Colonic mucosa (tissue), 4 donors: ENCODE measurements at regions of chr7 and their contacts with region 1.

Region 1: DNA sequence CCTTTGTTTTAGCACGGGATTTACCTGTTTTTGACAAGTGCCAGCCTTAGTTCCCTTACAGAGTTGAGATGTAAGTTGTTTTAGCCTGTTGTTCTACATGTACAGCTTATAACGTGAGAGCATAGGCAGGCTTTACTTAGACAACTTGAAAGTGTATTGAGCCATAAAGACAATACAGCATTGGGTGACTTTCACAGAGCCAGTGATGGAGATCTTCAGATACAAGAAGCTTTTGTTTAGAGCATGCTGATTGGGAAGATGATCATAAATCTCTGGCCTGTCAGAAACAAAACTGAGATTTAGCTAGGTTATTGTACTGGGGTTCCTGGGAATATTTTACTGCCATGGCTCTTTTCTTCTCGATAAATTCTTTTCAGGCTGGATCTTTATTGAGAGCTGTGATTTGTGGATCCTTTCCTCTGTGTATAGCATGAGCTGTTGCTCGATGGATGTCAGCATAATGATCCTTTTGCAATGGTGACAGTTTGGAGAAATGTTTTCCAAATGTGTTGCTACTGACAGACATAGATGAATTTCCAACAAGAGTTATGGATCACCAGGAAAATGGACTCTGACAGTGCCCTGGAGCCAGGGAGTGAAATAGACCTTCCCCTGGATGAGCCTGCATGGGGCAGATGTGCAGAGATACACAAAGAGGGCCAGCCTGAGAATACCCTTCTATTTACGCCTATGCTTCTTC is 30.2 kb downstream of the LHFPL3 start:
- DNase-seq: no peak
- H3K4me3 ChIP-seq: no peak overlapping the region
- H3K27ac ChIP-seq: no peak overlapping the region
- H3K4me1 ChIP-seq: no peaks in the 10 kb centered on the region
- H3K27me3 ChIP-seq: no peaks in the 10 kb centered on the region
- CTCF ChIP-seq: no peak

Region 2: DNA sequence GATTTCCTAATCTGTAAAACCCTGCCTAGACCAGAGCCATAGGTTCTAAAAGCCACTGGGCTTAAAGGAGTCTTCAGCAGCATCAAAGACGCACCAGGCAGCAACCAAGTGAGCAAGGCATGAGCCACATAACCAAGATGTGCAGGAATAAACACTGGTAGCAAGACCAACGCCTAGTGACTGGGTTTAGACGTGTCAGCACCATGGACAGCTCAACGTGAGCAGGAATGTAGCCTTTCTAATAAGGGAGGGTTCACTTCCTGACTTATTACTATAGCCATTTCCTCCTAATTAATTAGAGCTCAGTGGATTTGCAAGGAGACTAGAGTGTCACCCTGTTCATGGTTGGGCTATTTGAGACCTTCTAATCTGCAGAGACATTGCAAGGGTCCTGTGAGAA is 193.5 kb after region 1 on chr7:
- intact Hi-C with region 1: loop called (anchors 10 kb)
- DNase-seq: peak; percentile 43
- H3K4me3 ChIP-seq: no peak overlapping the region
- H3K27ac ChIP-seq: no peak overlapping the region
- H3K4me1 ChIP-seq: no peaks in the 10 kb centered on the region
- H3K27me3 ChIP-seq: no peaks in the 10 kb centered on the region
- CTCF ChIP-seq: no peak